Activated CD4-positive, alpha-beta T cell treated with anti-CD3 and anti-CD28 coated beads for 36 hours (primary cell): ENCODE measurements at regions of chr14 and their contacts with region 1.

Region 1: GRCh38 chr14:63867933-63868921 is 15.4 kb downstream of the SYNE2 start:
- DNase-seq: peak; percentile 26
- ATAC-seq: no peak
- H3K4me3 Mint-ChIP-seq: peak overlapping the region; percentile 1
- H3K27ac Mint-ChIP-seq: peak overlapping the region; percentile 70
- H3K4me1 Mint-ChIP-seq: peaks cover 62% of the 10 kb centered on the region
- H3K27me3 Mint-ChIP-seq: no peaks in the 10 kb centered on the region

Region 2: GRCh38 chr14:63881926-63882325 is 13.7 kb after region 1 on chr14:
- CTCF ChIA-PET with region 1: no interaction called
- POLR2A ChIA-PET with region 1: interaction called, 4 read pairs
- intact Hi-C with region 1: loop called in 1 of 2 experiments (anchors 1 kb)
- DNase-seq: no peak
- ATAC-seq: no peak
- H3K4me3 Mint-ChIP-seq: no peak overlapping the region
- H3K27ac Mint-ChIP-seq: no peak overlapping the region
- H3K4me1 Mint-ChIP-seq: peaks cover 7% of the 10 kb centered on the region
- H3K27me3 Mint-ChIP-seq: no peaks in the 10 kb centered on the region

Region 3: DNA sequence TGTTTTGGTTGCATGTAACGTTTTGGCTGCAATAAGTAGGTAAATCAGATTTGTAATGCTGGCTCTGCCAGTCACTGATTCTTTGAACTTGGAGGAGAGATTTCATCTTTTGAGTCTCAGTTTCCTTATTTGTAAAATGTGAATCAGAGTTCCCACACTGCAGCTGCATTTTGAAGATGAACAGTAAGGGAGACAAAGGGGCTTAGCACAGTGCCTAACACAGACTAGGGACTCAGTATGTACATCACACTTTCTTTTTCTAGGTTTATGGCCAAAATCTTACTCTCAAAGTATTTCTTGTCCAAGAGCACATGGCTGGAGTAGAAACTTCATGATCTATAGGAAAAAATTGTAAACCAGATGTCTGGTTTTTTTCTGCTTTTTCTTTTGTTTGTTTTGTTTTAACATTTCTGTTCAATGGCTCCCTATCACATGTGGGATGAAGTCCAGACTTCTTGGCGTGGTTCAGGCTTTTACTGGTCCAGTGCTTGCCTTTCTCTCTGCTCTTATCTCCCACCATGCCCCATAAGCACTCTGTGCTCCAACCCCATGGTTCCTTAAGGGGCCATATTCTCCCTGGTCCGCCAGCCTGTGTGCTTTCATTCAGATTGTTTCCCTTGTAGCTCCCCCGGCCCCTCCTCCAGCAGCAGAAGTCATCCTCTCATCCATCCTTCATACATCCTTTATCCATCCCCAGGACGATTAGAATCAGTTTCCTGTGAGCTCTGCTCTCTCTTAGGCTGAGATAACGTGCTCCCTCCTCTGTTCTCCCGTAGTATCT is 42.5 kb after region 1 on chr14:
- CTCF ChIA-PET with region 1: no interaction called
- POLR2A ChIA-PET with region 1: no interaction called
- intact Hi-C with region 1: loop called in 1 of 2 experiments (anchors 1 kb)
- DNase-seq: peak; percentile 24
- ATAC-seq: peak; percentile 94
- H3K4me3 Mint-ChIP-seq: no peak overlapping the region
- H3K27ac Mint-ChIP-seq: peak overlapping the region; percentile 44
- H3K4me1 Mint-ChIP-seq: peaks cover 47% of the 10 kb centered on the region
- H3K27me3 Mint-ChIP-seq: no peaks in the 10 kb centered on the region

Region 4: DNA sequence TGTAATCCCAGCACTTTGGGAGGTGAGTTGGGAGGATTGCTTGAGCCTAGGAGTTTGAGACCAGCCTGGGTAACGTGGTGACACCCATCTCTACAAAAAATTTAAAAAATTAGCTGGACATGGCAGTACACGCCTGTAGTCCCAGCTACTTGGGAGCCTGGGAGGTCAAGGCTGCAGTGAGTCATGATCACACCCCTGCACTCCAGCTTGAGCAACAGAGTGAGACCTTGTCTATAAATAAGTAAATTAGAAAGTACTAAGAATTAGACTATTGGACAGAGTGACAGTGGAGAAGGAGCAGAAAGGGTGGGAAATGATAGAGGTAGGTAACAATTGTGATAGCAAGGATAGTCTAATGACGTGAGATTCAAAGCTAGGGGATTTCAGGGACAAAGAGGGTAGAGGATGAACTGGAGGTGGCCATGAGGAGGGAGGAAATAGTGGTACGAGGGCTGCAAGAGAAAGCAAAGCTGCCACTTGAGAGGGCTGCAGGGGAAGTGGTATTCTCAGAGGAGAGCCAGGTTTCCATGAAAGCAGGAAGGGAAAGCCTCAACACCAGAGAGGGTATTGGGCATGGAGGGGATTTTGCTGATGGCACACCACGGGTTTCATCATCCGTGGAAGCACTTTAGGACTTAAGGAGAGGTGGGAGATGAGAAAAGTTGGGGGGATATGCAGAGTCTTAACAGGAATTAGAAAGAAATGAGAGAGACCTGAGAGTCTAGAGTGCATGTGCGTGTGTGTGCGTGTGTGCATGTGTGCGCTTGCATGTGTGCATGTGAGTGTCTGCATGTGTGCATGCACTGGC is 70.2 kb after region 1 on chr14:
- CTCF ChIA-PET with region 1: no interaction called
- POLR2A ChIA-PET with region 1: no interaction called
- intact Hi-C with region 1: no loop called
- DNase-seq: peak; percentile 18
- ATAC-seq: peak; percentile 43
- H3K4me3 Mint-ChIP-seq: no peak overlapping the region
- H3K27ac Mint-ChIP-seq: no peak overlapping the region
- H3K4me1 Mint-ChIP-seq: peaks cover 28% of the 10 kb centered on the region
- H3K27me3 Mint-ChIP-seq: no peaks in the 10 kb centered on the region